ENCODE measurements at regions of chrX and their contacts with region 1.

Region 1: DNA sequence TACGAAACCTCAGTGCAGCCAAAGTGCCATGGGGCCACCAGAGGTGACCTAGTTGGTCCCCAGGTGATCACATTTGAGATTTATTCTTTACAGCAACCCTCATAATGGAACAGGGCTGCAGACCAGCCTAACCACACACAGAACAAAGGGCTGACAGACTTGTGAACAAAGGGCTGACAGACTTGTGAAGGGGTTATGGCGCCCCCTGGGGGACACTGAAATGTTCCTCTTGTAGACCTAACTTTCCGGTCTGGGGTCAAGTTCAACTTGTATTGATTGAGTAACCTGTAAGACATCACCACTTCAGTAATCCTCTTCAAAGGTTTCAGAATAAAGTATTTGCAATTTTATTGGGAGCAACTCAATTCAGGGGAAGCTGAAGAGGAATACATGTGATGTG is 175.9 kb upstream of the RPS6KA3 start:
- DNase-seq: peak; percentile 85 to 95 (median 85)
- ATAC-seq: peak; percentile 87
- H3K4me3 ChIP-seq: no peak overlapping the region
- H3K4me1 ChIP-seq: peaks cover 8% of the 10 kb centered on the region
- CTCF ChIP-seq: no peak

Region 2: GRCh38 chrX:20116579-20117240 is 325.9 kb before region 1 on chrX and contains the start of gene MAP7D2:
- intact Hi-C with region 1: no loop called
- DNase-seq: peak in 1 of 3 donors; percentile 33
- ATAC-seq: peak; percentile 34
- H3K4me3 ChIP-seq: no peak within 1 kb of the TSS
- H3K4me1 ChIP-seq: peaks cover 4% of the 10 kb centered on the region
- CTCF ChIP-seq: no peak
- total RNA-seq, gene MAP7D2: 1.2 to 1.7 (median 1.5) TPM

Region 3: GRCh38 chrX:20252381-20253231 is 190.0 kb before region 1 on chrX:
- intact Hi-C with region 1: loop called (anchors 5 to 10 kb)
- DNase-seq: peak in 2 of 3 donors; percentile 85 to 87
- ATAC-seq: peak; percentile 93
- H3K4me3 ChIP-seq: no peak overlapping the region
- H3K4me1 ChIP-seq: no peaks in the 10 kb centered on the region
- CTCF ChIP-seq: peak; percentile 16

Region 4: DNA sequence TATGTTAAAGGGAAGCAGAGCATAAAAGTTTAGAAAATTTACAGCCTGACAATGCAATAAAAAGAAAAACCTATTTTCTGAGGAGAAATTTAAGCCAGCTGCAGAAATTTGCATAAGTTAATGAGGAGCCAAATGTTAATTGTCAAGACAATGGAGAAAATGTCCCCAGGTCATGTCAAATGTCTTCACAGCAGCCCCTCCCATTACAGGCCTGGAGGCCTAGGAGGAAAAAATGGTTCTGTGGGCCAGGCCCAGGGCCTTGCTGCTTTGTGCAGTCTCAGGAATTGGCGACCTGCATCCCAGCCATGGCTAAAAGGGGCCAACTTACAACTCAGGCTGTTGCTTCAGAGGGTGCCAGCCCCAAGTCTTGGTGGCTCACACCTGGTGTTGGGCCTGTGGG is 99.5 kb after region 1 on chrX:
- intact Hi-C with region 1: no loop called
- DNase-seq: no peak
- ATAC-seq: no peak
- H3K4me3 ChIP-seq: no peak overlapping the region
- H3K4me1 ChIP-seq: no peaks in the 10 kb centered on the region
- CTCF ChIP-seq: no peak